OCI-LY7 (cell line): ENCODE measurements at regions of chr20 and their contacts with region 1.

Region 1: GRCh38 chr20:46089417-46090388 is at the start of gene NCOA5:
- DNase-seq: peak; percentile 97
- H3K4me3 ChIP-seq: peak within 1 kb of the TSS; percentile 81
- H3K27ac ChIP-seq: peak within 1 kb of the TSS; percentile 60
- H3K4me1 ChIP-seq: peaks cover 35% of the 10 kb centered on the region
- CTCF ChIP-seq: peak; percentile 38; the same call in 1 of the 2 replicates
- total RNA-seq, gene NCOA5: 21.8 and 23.4 TPM in 2 replicates

Region 2: GRCh38 chr20:46060301-46060881 is 29.3 kb before region 1 on chr20:
- CTCF ChIA-PET with region 1: no interaction called
- POLR2A ChIA-PET with region 1: no interaction called
- intact Hi-C with region 1: no loop called
- DNase-seq: peak; percentile 82
- H3K4me3 ChIP-seq: no peak overlapping the region
- H3K27ac ChIP-seq: peak overlapping the region; percentile 56
- H3K4me1 ChIP-seq: peaks cover 23% of the 10 kb centered on the region
- CTCF ChIP-seq: no peak; the same call in 1 of the 2 replicates

Region 3: DNA sequence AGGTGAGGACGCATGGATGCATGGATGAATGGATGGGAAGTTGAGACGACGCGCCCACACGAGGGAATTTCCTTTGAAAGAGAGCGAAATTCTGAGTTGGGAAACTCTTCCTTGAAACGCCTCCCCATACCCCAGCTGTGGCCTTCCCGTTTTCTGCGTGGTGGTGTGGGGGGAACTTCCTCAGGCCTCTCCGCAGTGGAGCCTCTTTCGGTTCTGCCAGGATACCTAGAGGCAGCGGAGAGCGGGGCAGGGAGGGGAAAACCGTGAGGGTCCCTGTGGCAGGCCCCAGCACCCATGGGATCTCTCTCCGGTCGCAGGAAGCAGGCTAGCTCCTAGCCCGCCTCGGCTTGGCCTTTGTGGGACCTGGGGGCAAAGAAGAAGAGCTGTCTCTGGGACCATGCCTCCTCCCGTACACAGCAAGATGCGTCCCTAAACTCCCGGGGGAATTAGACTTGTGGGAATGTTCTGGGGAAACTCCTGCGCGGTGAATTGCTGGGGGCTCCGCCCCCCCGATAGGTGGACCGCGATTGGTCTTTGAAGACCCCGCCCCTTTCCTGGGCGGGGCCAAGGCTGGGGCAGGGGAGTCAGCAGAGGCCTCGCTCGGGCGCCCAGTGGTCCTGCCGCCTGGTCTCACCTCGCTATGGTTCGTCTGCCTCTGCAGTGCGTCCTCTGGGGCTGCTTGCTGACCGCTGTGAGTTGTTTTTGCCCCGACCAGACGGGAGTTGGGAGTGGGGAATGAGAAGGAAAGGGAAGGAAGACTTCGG is 28.2 kb after region 1 on chr20 and contains the start of gene CD40:
- CTCF ChIA-PET with region 1: no interaction called
- POLR2A ChIA-PET with region 1: interaction called, 3 read pairs
- intact Hi-C with region 1: loop called (anchors 2 kb)
- DNase-seq: peak; percentile 91
- H3K4me3 ChIP-seq: peak within 1 kb of the TSS; percentile 81
- H3K27ac ChIP-seq: peak within 1 kb of the TSS; percentile 90
- H3K4me1 ChIP-seq: peaks cover 29% of the 10 kb centered on the region
- CTCF ChIP-seq: no peak
- total RNA-seq, gene CD40: 23.0 and 34.7 TPM in 2 replicates